Left cardiac atrium (tissue), 4 donors: ENCODE measurements at regions of chr1 and their contacts with region 1.

Region 1: DNA sequence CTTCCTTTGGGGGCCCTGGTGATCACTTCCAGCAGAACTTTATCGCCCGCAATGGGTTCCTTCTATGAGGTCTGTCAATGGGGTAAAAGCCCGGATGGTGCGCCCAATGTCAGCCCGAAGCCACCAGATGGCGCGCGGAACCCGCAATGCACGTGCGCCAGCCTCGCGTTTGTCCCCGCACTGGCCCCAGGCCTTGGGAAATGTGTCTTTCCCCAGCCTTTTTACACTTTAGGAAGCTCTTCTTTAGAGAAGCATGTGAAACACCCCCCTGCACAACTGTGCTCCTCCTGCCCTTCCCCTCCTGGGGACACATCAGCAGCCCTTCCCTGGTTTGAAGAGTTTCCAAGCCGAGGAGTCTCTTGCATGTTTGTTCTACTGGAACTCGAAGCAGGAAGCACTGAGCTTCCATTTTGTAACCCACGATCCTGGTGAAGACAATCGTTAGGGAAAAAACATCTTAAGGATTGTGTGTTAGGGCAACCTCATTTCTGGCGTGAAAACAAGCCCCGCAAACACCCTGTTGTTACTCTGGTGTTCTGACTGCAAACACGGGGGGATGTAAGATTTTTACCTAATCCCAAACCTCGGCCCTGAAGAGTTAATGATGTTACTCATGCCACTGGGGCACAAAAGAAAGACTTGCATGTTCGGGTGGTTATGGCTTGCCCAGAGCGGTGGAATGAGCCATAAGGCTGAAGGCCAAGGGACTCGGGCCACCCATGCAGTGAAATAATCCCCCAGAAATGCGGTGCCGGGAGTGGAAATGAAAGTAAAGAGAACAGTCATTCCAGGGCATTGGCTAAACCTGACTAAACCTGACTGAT is 20.4 kb upstream of the TARBP1 start:
- DNase-seq: peak; percentile 92
- ATAC-seq: peak; percentile 95 to 96

Region 2: GRCh38 chr1:234599617-234600417 is 100.5 kb after region 1 on chr1:
- intact Hi-C with region 1: loop called (anchors 2 to 5 kb)
- DNase-seq: peak; percentile 90
- ATAC-seq: peak; percentile 94

Region 3: DNA sequence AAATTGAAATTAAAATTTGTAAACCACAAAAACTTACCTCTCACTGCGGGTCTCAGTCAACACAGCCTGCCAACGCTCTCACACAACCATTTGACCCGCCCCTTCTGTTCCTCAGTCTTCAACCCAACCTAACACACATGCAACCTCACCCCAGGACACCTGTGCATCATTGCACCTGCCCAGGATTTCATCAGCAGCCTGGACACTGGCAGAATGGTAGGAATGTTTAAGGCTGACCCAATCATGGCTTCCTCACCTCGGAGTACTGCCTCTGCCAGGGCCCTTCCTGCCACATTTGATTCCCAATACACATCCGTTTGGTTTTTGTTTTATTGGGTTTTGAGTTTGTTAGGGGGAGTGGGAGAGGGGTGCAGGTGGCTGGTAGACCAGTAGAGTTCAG is 588.6 kb after region 1 on chr1:
- intact Hi-C with region 1: loop called (anchors 2 to 5 kb)
- DNase-seq: no peak
- ATAC-seq: no peak